Posterior vena cava (tissue), 2 donors: ENCODE measurements at regions of chr15 and their contacts with region 1.

Region 1: GRCh38 chr15:66789029-66790025 is 87.3 kb downstream of the SMAD6 start:
- DNase-seq: no peak

Region 2: DNA sequence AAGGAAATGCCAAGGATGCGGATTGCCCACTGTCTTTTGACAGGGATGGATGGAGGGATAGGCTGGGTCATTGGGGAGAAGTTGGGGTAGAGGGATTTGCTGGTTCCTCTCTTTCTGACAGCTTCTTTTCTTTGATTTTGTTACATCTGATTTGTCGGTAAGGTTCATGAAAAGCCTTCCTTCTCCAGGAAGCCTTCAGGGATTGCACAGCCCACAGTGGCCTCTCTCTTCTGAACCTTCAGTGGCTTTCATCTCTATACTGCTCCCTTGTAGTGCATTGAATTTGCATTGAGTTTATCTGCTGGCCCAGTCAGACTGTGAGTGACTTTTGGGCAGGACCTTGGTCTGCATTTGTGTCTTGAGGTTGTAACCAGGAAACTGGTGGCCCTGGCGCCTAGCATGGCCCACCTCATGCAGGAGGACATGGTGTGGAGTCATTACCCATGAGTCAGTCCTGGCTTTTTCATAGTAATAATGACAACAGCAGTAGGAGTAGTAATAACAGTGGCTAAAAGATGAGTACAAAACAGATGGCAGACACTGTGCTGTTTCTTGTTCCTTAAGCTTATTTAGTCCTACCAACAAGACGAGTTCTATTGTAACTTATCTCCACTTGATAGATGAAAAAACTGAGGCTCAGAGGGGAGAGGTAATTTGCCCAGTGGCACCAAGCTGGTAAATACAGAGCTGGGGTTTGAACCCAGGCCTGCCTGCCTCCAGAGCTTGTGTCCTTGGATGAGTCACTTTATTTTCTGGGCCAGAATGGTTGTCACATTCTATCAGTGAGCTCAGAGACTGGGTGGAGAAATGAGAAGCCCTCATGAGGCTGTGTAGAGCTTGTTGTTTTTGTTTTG is 58.9 kb before region 1 on chr15:
- intact Hi-C with region 1: no loop called
- DNase-seq: no peak

Region 3: DNA sequence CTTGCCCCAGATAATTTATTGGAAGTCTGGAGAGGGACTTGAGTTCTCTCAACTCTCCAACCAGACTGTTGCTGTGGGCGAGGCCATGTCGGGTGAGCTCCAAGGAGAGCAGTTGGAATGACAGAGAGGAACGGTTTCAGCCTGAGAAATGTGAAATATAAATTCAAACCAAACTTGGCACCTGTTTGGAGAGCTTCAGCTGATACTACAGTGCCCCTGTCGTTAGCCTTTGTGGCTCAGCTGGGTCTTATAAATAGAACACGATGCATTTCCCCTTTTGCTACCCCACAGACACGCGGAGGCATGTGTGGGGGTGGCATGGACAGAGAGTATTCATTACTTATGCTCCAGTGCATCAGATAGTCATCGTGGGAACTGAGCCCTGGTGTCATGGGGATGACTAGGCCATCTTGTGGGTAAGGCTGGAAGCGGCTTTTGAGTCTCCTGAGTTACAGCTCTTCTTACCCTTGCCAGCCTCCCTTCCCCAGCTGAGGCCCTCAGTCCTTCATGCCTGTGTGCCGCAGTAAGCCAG is 291.6 kb after region 1 on chr15:
- intact Hi-C with region 1: no loop called
- DNase-seq: peak; percentile 85

Region 4: DNA sequence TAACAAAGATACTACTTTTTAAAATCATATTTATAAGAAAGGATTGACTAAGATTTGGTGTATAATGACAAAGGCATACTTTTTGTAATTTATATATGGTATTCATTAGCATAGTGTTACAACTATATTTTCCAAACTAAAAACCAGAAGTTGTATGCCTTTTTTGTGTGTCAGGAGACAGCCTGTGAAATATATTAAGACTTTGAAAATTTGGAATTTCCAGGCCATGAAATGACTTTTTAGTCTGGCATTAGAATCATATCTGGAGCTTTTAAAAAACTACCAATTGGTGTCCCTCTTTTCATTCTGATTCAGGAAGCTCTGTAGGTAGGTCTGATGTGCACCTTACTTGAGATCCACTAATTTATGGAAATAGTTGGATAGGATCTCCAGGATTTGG is 1373.9 kb after region 1 on chr15:
- intact Hi-C with region 1: loop called in 1 of 2 experiments (anchors 5 kb)
- DNase-seq: no peak